ENCODE measurements at regions of chr18 and their contacts with region 1.

Region 1: DNA sequence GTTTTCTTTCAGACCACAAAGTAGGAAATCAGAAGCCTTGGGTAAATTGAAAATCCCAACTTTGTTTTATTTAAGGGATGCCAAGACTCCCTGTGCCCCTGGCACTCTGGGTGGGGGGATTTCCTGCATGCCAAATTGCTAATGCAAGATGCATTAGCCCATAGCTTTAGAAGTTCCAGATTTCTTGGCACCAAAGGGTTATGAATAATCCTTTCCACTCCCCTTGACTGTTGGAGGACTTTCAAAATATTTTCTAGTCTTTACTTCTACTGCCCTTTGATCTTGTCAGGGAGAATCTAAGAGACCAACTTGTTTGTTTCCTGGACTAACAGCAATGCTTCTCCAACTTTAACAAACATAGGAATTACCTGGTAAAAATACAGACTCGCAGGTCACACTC is 81.8 kb upstream of the TGIF1 start:
- DNase-seq: no peak
- H3K4me3 ChIP-seq: no peak overlapping the region
- H3K27ac ChIP-seq: no peak overlapping the region
- H3K27me3 ChIP-seq: no peaks in the 10 kb centered on the region
- CTCF ChIP-seq: no peak

Region 2: DNA sequence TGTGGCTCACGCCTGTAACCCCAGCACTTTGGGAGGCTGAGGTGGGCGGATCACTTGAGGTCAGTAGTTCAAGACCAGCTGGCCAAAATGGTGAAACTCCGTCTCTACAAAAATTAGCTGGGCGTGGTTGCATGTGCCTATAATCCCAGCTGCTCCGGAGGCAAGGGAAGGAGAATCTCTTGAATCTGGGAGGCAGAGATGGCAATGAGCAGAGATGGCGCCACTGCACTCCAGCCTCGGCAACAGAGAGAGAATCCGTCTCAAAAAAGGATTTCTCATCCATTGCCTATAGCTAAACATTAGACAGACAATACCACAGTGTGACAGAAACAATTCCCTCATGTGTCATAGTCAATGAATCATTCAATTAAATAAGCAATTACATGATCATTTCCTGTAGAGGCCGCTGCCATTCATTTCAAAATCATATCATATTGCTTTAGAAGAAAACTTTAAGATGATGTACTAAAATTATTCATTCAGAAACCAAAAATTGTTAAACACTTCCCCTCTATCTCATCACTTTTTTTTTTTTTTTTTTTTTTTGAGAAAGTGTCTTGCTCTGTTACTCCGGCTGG is 12.3 kb after region 1 on chr18:
- intact Hi-C with region 1: loop called in 1 of 2 experiments (anchors 1 kb)
- DNase-seq: no peak
- H3K4me3 ChIP-seq: no peak overlapping the region
- H3K27ac ChIP-seq: no peak overlapping the region
- H3K27me3 ChIP-seq: peaks cover 0 to 3% (median 0%) of the 10 kb centered on the region in 45 donors
- CTCF ChIP-seq: no peak

Region 3: GRCh38 chr18:3441290-3441689 is 73.1 kb after region 1 on chr18:
- intact Hi-C with region 1: no loop called
- DNase-seq: peak in 1 of 10 donors; percentile 46
- H3K4me3 ChIP-seq: no peak overlapping the region
- H3K27ac ChIP-seq: peak overlapping the region in 3 of 59 donors; percentile 7 to 29 (median 21)
- H3K27me3 ChIP-seq: peaks cover 0 to 2% (median 0%) of the 10 kb centered on the region in 45 donors
- CTCF ChIP-seq: peak in 48 of 56 donors; percentile 14 to 68 (median 43)